Heart left ventricle (tissue), 16 donors: ENCODE measurements at regions of chr7 and their contacts with region 1.

Region 1: DNA sequence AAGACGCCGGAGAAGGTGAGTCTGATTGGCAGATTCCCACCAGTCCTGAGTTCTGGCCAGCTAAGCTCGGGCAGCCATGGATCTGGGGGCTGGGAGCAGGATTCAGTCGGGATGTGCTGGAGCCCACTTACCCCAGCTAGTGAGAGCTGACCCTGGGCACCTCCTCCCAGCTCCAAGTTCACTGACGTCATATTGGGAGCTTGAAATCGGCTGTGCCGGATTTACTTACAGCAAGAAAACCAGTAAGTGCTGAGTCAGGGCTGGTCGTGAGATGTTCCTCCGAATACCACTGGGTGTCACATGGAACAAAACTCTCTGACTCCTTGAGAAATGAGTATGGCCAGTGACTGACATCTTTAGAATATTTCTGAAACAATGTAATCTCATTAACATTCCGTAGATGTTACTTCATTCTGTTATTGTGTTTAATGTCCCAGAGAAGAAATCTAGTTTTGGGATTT is 621.2 kb downstream of the SDK1 start:
- DNase-seq: peak in 2 of 5 donors; percentile 18 to 47
- ATAC-seq: peak; percentile 20 to 85 (median 66)
- H3K4me3 ChIP-seq: no peak overlapping the region
- H3K27ac ChIP-seq: no peak overlapping the region
- H3K4me1 ChIP-seq: peaks cover 0 to 5% (median 0%) of the 10 kb centered on the region in 12 donors
- H3K27me3 ChIP-seq: no peaks in the 10 kb centered on the region
- CTCF ChIP-seq: peak in 5 of 12 donors; percentile 9 to 32 (median 21)
- POLR2A ChIP-seq: no peak

Region 2: DNA sequence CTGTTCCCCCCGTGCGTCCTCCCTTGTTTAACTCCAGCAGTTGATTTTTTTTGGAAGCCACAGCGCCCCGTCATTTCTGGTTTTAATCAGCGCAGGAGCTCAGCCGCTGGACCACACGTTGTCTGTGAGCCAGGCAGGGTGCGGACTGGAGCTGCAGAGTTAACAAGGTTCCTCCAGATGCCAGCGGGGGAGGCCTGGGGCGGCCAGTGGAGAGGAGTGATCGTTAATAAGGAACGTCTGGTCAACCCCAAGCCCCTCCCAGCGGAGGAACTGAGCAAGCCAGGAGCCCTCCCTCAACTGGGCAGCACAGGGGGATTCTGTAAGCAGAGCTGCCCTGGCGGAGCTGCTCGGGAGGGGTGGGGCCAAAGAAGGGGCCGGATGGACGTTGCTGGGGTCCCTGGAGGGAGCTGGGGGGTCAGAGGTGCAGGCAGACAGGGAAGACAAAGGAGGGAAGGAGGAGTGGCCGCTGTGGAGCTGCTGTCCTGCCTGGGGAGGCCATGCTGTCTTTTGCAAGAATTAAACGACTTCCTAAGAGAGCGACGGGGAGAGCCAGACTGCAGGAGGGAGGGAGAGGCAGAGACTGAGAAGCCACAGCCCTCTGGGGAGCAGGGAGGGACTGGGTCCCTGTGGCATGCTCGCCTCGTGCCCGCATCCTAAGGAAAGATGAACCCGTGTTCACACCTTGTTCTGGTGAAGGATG is 222.8 kb after region 1 on chr7:
- intact Hi-C with region 1: no loop called
- DNase-seq: peak in 3 of 5 donors; percentile 25 to 59 (median 54)
- ATAC-seq: peak in 3 of 4 donors; percentile 5 to 57 (median 43)
- H3K4me3 ChIP-seq: peak overlapping the region in 8 of 12 donors; percentile 3 to 32 (median 18)
- H3K27ac ChIP-seq: no peak overlapping the region
- H3K4me1 ChIP-seq: peaks cover 0 to 4% (median 0%) of the 10 kb centered on the region in 12 donors
- H3K27me3 ChIP-seq: peaks cover 0 to 8% (median 0%) of the 10 kb centered on the region in 9 donors
- CTCF ChIP-seq: no peak
- POLR2A ChIP-seq: no peak

Region 3: GRCh38 chr7:4479367-4480039 is 557.3 kb after region 1 on chr7:
- intact Hi-C with region 1: loop called in 1 of 10 experiments (anchors 10 kb)
- DNase-seq: no peak
- ATAC-seq: peak in 2 of 4 donors; percentile 49 to 55
- H3K4me3 ChIP-seq: no peak overlapping the region
- H3K27ac ChIP-seq: no peak overlapping the region
- H3K4me1 ChIP-seq: no peaks in the 10 kb centered on the region
- H3K27me3 ChIP-seq: no peaks in the 10 kb centered on the region
- CTCF ChIP-seq: peak in 10 of 12 donors; percentile 20 to 44 (median 30)
- POLR2A ChIP-seq: no peak

Region 4: DNA sequence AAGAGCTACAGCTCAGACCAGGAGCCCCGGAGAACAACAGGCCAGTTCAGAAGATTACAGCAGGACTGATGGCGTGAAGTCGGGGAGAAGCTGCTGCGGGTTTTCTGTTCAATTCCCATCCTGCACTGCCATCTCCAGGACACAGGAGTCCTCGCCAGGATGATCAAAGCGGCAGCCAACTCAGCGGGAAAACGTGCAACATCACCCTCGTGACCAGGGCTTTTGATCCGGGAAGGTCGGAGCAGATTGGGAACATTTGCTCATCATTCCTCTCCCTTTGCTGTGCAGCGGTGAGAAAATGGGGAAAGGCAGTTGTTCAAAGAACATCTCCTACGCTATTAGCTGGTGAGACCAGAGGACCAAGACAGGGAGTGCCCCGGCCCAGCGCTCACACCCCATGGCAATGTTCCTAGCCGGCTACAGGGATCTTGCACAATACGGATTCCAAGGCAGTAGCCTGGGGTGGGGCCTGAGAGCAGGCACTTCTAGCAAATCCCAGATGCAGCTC is 709.5 kb after region 1 on chr7:
- intact Hi-C with region 1: loop called in 1 of 10 experiments (anchors 5 kb)
- DNase-seq: peak; percentile 66 to 84 (median 79)
- ATAC-seq: peak; percentile 78 to 98 (median 95)
- H3K4me3 ChIP-seq: peak overlapping the region in 9 of 12 donors; percentile 18 to 41 (median 32)
- H3K27ac ChIP-seq: peak overlapping the region in 3 of 12 donors; percentile 43 to 64 (median 44)
- H3K4me1 ChIP-seq: peaks cover 0 to 13% (median 6%) of the 10 kb centered on the region in 12 donors
- H3K27me3 ChIP-seq: no peaks in the 10 kb centered on the region
- CTCF ChIP-seq: peak; percentile 42 to 78 (median 65)
- POLR2A ChIP-seq: no peak